ENCODE measurements at regions of chr7 and their contacts with region 1.

Region 1: DNA sequence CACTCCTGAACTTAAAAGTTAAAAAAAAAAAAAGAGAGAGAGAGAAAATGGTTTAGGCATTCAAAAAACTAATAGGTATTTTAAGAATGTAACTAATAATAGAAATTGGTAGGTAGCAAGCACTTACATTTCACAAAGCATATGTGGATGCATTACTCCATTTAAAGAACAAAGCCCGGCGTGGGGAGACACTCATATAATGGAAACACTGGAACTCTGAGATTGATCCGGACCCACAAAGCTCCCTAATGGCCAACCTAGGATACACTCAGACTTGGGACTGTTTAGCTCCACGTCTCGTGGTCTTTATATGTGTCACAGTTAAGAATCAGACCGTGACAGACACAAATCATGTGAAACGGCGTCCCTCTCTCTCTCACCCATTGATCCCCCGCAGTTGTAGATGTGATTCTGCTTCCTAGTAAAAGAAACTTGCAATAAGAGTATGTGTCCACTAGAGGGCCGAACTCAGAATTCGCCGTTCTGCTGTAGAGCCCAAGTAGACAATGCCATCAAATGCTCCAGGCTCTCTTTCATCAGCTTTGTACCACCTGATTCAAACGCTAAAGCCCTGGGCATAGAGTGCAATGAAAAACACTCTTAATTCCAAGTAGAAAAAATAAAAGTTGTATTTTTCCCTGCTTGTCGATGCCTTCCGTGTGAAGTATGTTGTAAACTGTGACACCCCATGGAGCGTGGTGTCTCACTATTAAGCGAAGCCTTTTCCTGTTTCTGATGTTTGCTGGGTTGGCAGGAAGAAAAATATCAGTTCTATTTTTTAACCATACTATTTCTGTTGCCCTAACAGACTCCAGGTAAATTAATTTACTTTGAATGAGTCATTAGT is 429.0 kb upstream of the MTPN start:
- DNase-seq: peak; percentile 61
- H3K4me3 Mint-ChIP-seq: no peak overlapping the region
- H3K27ac Mint-ChIP-seq: no peak overlapping the region
- H3K4me1 Mint-ChIP-seq: no peaks in the 10 kb centered on the region
- H3K27me3 Mint-ChIP-seq: peaks cover 62% of the 10 kb centered on the region
- CTCF ChIP-seq: peak; percentile 72

Region 2: GRCh38 chr7:136374962-136375361 is 31.2 kb before region 1 on chr7:
- CTCF ChIA-PET with region 1: interaction called, 11 read pairs
- POLR2A ChIA-PET with region 1: no interaction called
- intact Hi-C with region 1: no loop called
- DNase-seq: no peak
- H3K4me3 Mint-ChIP-seq: no peak overlapping the region
- H3K27ac Mint-ChIP-seq: no peak overlapping the region
- H3K4me1 Mint-ChIP-seq: no peaks in the 10 kb centered on the region
- H3K27me3 Mint-ChIP-seq: peaks cover 25% of the 10 kb centered on the region
- CTCF ChIP-seq: no peak